ENCODE measurements at regions of chr5 and their contacts with region 1.

Region 1: DNA sequence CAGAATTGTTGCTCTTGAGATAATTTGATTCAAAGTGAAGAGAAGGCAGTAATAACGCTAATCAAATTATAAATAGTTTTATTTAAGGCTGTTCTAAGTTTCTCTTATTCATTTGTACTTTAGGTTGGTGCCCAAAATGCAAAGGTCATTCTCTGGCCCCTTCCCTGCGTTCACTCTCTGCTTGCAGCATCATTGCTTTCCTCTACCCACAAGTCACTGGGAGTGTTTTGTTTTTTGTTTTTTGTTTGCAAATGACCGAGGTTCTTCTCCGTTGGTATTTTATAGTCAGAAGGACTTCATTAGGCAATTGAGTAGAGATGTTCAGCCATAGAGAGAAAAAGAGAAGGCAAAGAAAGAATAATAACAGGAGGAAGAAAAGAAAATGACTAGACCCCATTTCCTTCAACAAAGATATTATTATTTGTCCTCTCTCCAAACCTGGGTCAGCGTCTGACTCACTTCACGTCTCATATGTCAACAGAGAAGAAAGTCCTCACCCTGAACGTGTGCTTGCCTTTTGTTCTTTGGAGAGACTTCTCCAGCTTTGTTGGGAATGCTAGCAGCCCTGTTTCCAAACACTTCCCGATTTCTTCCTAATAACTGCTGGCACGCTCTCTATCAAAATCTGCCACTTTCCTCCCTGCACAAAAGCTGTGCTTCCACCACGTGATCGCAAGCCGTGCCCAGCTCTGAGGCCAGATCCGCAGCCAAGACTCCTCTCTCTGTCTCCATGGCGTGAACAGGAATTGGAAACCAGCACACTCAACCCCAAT is 119.8 kb downstream of the EBF1 start:
- DNase-seq: no peak
- CTCF ChIP-seq: no peak

Region 2: GRCh38 chr5:158967541-158967940 is 12.4 kb before region 1 on chr5:
- CTCF ChIA-PET with region 1: interaction called, 33 read pairs
- POLR2A ChIA-PET with region 1: no interaction called
- DNase-seq: no peak
- CTCF ChIP-seq: no peak

Region 3: DNA sequence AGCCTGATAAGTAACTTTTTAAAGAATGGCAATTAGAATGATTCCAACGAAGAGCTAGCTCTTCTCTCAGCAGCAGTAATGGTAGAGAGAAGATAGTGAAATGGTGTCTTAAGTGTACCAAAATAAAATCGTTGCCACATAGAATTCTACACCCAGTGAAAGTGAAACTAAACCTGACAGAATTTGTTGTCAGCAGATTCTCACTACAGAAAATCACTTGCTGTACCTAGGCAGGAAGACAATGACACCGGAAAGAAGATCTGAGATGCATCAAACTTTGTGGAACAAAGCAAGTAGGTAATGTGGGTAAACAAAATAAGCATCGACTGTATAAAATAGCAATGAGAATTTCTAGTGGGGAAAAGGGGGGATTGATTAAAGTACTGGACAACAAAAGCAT is 140.5 kb after region 1 on chr5:
- CTCF ChIA-PET with region 1: no interaction called
- POLR2A ChIA-PET with region 1: no interaction called
- DNase-seq: no peak
- CTCF ChIP-seq: no peak

Measured in GM10248 (cell line).